Aorta (tissue), 5 donors: ENCODE measurements at regions of chr19 and their contacts with region 1.

Region 1: GRCh38 chr19:18049385-18049784 is 37.3 kb downstream of the IL12RB1 start:
- DNase-seq: peak; percentile 98 to 99
- ATAC-seq: peak; percentile 92
- H3K4me3 ChIP-seq: no peak overlapping the region
- H3K27ac ChIP-seq: peak overlapping the region in 1 of 2 donors; percentile 66
- H3K4me1 ChIP-seq: no peaks in the 10 kb centered on the region
- H3K27me3 ChIP-seq: no peaks in the 10 kb centered on the region

Region 2: DNA sequence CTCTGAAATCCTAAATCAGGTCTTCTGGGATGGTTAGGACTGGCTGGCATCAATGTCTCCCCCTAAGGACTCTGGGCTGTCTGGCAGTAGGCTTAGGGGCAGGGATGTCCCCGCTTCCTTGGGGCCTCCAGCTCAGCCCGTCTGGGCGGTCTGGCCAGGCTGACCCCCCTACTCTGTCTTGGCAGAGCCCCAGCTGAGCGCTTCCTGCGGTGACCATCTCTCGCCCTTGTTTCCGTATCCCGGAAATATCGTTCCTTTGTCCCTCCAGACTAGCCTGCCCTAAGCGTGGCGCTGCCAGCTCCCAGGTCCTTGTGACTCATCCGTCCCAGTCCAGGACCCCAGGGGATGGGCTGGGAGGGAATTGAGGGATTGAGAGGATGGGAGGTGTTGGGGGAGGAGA is 700.7 kb before region 1 on chr19:
- intact Hi-C with region 1: no loop called
- DNase-seq: peak; percentile 90 to 92
- ATAC-seq: peak; percentile 72
- H3K4me3 ChIP-seq: no peak overlapping the region
- H3K27ac ChIP-seq: no peak overlapping the region
- H3K4me1 ChIP-seq: peaks cover 3 to 4% of the 10 kb centered on the region in 2 donors
- H3K27me3 ChIP-seq: no peaks in the 10 kb centered on the region

Region 3: DNA sequence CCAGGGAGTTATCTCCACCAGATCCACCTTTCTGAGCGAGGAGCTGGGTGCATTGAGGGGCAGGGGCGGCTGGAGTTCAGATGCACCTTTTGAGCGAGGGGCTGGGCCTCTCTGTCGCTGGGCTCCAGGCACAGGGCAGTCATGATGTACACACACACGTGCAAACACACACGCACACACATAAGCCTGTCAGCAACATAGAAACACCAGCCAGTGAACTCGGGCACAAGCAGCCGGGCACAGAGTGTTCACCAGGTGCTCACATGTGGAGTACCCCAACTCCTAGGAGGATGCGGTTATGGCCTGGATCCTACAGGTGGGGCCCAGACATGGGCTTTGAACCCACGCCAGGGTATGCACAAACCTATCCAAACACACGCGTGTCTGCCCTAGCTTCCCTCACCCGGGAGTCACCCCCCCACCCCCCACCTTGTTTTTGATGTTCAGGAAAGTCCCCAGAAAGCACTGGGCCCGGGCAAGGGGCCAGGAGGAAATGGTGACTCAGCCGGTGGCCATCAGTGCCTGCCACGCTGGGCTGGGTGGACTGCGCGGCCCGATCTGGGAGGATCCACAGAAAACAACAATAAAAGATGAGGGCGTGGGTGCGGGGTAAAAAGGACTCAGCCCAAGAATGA is 28.1 kb before region 1 on chr19:
- intact Hi-C with region 1: loop called (anchors 2 kb)
- DNase-seq: peak; percentile 96 to 98
- ATAC-seq: peak; percentile 82
- H3K4me3 ChIP-seq: no peak overlapping the region
- H3K27ac ChIP-seq: peak overlapping the region; percentile 51 to 98
- H3K4me1 ChIP-seq: peaks cover 2 to 4% of the 10 kb centered on the region in 2 donors
- H3K27me3 ChIP-seq: no peaks in the 10 kb centered on the region

Region 4: DNA sequence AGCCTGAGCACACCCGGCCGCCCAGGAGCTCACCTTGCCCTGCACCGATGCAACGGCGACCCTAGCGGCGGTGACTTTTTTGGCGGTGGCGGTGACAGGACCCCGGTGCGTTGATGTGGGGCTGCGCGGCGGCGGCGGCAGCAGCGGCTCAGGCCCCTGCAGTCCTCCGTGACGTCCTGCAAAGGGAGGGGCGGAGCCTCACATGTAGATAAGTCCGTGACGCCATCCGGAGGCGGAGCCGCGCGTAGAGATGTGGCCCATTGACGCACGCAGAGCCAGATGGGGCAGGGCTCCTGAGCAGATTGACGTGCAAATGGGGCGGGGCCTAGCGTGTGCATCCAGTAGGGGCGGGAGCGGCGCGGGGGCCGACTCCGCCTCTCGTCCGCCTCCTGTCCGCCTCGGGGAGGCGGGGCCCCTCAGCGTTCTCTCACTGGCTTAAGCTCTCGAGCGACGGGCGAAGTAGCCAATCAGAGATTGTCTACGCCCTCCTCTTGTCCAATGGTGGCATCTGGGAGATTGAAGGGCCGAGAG is 154.5 kb after region 1 on chr19 and contains the start of gene RAB3A:
- intact Hi-C with region 1: no loop called
- DNase-seq: peak; percentile 100
- ATAC-seq: peak; percentile 98
- H3K4me3 ChIP-seq: peak within 1 kb of the TSS; percentile 41 to 66
- H3K27ac ChIP-seq: peak within 1 kb of the TSS; percentile 72 to 87
- H3K4me1 ChIP-seq: peaks cover 0 to 3% of the 10 kb centered on the region in 2 donors
- H3K27me3 ChIP-seq: no peaks in the 10 kb centered on the region
- total RNA-seq, gene RAB3A: 3.4 to 3.8 TPM